ENCODE measurements at regions of chr10 and their contacts with region 1.

Region 1: GRCh38 chr10:75547391-75548298 is 116.2 kb downstream of the LRMDA start:
- DNase-seq: no peak
- H3K4me3 ChIP-seq: no peak overlapping the region
- H3K27ac ChIP-seq: peak overlapping the region; percentile 58 to 68
- H3K4me1 ChIP-seq: peaks cover 0 to 31% of the 10 kb centered on the region in 2 donors
- H3K27me3 ChIP-seq: no peaks in the 10 kb centered on the region
- CTCF ChIP-seq: no peak

Region 2: DNA sequence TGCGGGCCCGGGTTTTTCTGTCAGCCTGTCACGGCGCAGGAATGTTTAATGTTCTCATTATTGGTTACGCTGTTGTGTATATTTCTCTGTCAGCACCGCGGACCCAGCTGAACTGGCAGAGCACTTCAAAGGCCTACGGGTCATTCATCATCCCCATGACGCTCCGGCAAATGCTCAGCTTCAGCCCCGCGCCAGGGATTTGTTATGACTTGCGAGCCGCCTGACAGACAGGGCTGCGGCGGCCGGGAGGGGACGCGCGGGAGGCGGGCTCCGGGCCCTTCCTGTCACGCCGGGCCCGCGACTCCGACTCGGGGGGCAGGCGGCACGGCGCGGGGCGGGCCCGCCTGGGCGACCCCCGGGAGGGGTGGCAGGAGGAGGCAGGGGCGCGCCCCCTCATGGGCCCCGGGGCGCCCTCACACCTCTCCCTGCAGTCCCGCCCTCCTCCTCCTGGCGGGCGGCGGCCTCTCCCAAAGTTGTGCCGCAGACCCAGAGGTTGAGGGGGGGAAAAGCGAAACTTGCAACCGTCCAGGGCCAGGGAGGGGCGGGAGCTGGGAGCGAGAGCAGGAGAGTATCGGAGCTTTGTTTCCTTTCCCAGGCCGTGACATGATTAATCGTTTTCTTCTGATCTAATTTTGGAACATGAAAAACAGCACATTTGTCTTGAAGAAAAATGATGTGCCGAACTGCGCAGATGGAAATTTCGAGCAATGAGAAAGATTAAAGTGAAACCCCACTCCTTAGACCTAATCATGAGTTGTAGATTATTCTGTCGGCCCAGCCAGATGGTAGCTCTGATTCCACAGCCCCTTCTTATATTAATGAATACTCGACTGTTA is 252.6 kb before region 1 on chr10:
- intact Hi-C with region 1: loop called (anchors 10 kb)
- DNase-seq: peak; percentile 60 to 93
- H3K4me3 ChIP-seq: peak overlapping the region; percentile 79 to 92
- H3K27ac ChIP-seq: peak overlapping the region; percentile 91 to 94
- H3K4me1 ChIP-seq: peaks cover 11 to 23% of the 10 kb centered on the region in 2 donors
- H3K27me3 ChIP-seq: no peaks in the 10 kb centered on the region
- CTCF ChIP-seq: peak in 2 of 3 experiments; percentile 20 to 51

Region 3: DNA sequence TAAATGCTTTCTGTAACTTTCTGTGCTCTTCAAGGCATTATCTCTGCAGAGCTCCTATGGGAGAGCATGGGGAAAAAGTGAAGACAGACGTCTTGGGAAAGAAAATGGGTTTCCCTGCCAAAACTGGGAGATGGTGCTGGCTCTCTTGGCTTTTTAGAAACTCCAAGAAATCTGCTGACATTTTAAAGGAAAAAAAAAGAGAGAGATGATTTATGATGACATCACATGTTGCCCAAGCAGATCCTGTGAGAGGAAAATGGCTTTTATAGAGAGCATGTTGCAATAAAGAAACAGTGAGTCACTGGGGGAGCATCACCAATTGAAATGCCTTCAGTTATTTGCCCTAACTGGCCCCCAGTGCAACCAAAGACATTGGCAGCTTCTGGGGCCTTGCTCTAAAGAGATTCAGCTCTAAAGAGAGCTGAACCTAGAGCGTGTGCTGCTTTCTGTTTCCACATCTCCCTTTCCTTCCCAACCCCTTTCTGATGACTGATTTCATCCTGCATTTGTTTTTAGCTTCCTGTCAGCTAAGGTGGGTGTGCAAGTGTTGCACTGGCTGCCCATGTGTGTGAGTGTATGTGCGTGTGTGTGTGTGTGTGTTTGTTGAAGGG is 78.5 kb before region 1 on chr10:
- intact Hi-C with region 1: loop called (anchors 5 kb)
- DNase-seq: peak in 1 of 2 donors; percentile 84
- H3K4me3 ChIP-seq: no peak overlapping the region
- H3K27ac ChIP-seq: peak overlapping the region in 1 of 2 donors; percentile 52
- H3K4me1 ChIP-seq: peaks cover 4 to 13% of the 10 kb centered on the region in 2 donors
- H3K27me3 ChIP-seq: no peaks in the 10 kb centered on the region
- CTCF ChIP-seq: no peak

Region 4: DNA sequence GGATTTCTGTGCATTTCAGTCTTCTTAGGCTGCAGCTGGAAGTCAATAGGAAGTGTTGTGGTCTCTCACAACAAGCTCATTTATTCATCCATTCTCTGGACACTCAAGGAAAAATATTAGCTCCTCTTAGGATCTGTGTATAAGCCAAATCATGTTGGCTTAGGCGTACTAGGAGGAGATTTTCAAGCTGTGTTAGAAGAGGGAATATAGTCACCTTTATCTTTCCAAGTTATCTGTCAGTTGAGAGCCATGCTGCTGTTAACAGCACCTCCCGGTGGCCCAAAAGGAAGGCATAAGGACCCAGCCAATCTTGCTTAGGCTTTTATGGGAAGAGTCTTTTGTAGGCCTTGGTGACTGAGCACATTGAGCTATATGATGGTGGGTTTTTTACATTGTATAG is 103.8 kb after region 1 on chr10:
- intact Hi-C with region 1: loop called (anchors 5 kb)
- DNase-seq: no peak
- H3K4me3 ChIP-seq: no peak overlapping the region
- H3K27ac ChIP-seq: no peak overlapping the region
- H3K4me1 ChIP-seq: peaks cover 12 to 37% of the 10 kb centered on the region in 2 donors
- H3K27me3 ChIP-seq: no peaks in the 10 kb centered on the region
- CTCF ChIP-seq: peak in 1 of 3 experiments; percentile 7

Region 5: GRCh38 chr10:76397181-76397881 is 849.7 kb after region 1 on chr10:
- intact Hi-C with region 1: no loop called
- DNase-seq: peak; percentile 46 to 89
- H3K4me3 ChIP-seq: peak overlapping the region; percentile 16 to 47
- H3K27ac ChIP-seq: peak overlapping the region; percentile 91 to 92
- H3K4me1 ChIP-seq: peaks cover 17 to 44% of the 10 kb centered on the region in 2 donors
- H3K27me3 ChIP-seq: no peaks in the 10 kb centered on the region
- CTCF ChIP-seq: peak in 2 of 3 experiments; percentile 41 to 42